Colonic mucosa (tissue), 4 donors: ENCODE measurements at regions of chr10 and their contacts with region 1.

Region 1: GRCh38 chr10:24463611-24464426 is 254.9 kb downstream of the KIAA1217 start:
- DNase-seq: peak; percentile 63
- H3K4me3 ChIP-seq: no peak overlapping the region
- H3K27ac ChIP-seq: peak overlapping the region; percentile 74
- H3K4me1 ChIP-seq: no peaks in the 10 kb centered on the region
- H3K27me3 ChIP-seq: no peaks in the 10 kb centered on the region
- CTCF ChIP-seq: no peak

Region 2: DNA sequence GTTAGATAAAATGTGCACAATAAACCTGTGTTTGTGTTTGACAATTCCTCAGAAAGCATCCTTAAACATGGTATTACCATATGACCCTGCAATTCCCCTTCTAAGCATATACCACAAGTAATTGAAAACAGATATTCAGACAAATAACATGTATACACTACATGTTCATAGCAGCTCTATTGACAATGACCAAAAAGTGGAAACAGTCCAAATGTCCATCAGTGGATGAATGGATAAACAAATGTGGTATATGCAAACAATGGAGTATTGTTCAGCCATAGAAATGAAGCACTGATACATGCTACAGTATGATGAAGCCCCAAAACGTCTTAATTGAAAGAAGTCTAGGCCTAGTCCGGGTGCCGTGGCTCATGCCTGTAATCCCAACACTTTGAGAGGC is 744.9 kb before region 1 on chr10:
- intact Hi-C with region 1: no loop called
- DNase-seq: no peak
- H3K4me3 ChIP-seq: no peak overlapping the region
- H3K27ac ChIP-seq: no peak overlapping the region
- H3K4me1 ChIP-seq: no peaks in the 10 kb centered on the region
- H3K27me3 ChIP-seq: no peaks in the 10 kb centered on the region
- CTCF ChIP-seq: no peak

Region 3: DNA sequence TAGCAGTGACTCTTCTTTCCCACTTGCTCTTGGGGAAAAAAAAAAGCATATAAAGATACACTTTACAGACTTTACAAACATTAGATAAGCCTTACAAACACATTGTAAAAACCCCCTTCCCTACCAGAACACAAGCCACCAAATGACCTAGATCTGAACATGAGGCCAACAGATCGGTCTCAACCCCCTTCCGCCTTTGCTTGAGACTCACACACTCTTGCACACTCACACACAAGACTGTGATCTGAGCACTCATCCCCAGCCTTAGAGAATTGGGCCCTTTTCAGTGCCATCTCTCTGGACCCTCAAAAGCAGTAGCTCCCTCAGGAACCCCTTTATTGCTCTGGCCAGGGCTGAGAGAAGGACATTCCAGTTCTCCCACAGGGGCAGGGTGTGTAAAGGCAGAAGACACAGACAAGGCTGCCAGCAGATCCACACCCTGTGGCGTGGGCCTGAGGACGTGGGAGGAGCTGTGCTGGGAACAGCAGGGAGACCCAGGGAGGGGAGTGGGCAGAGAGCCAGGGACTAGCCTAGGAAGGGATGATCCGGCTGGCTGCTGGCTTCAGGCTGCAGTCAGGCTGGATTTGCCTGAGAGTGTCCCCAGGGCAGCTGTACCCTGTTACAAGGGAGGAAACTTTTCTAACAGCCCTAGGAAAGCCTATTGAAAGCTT is 48.2 kb before region 1 on chr10:
- intact Hi-C with region 1: loop called (anchors 5 kb)
- DNase-seq: peak; percentile 91
- H3K4me3 ChIP-seq: no peak overlapping the region
- H3K27ac ChIP-seq: peak overlapping the region; percentile 74
- H3K4me1 ChIP-seq: peaks cover 7% of the 10 kb centered on the region
- H3K27me3 ChIP-seq: no peaks in the 10 kb centered on the region
- CTCF ChIP-seq: no peak